MCF 10A (cell line): ENCODE measurements at regions of chr16 and their contacts with region 1.

Region 1: GRCh38 chr16:27154705-27155521 is 48.4 kb upstream of the KDM8 start:
- DNase-seq: peak; percentile 48
- H3K4me3 Mint-ChIP-seq: no peak overlapping the region
- H3K27ac Mint-ChIP-seq: no peak overlapping the region
- H3K4me1 Mint-ChIP-seq: no peaks in the 10 kb centered on the region
- H3K27me3 Mint-ChIP-seq: no peaks in the 10 kb centered on the region
- CTCF ChIP-seq: peak; percentile 85

Region 2: GRCh38 chr16:27109666-27110523 is 45.0 kb before region 1 on chr16:
- CTCF ChIA-PET with region 1: interaction called, 11 read pairs
- POLR2A ChIA-PET with region 1: no interaction called
- intact Hi-C with region 1: no loop called
- DNase-seq: peak; percentile 49
- H3K4me3 Mint-ChIP-seq: no peak overlapping the region
- H3K27ac Mint-ChIP-seq: no peak overlapping the region
- H3K4me1 Mint-ChIP-seq: no peaks in the 10 kb centered on the region
- H3K27me3 Mint-ChIP-seq: peaks cover 28% of the 10 kb centered on the region
- CTCF ChIP-seq: peak; percentile 97

Region 3: GRCh38 chr16:27169511-27170071 is 14.7 kb after region 1 on chr16:
- CTCF ChIA-PET with region 1: interaction called, 132 read pairs
- POLR2A ChIA-PET with region 1: interaction called, 5 read pairs
- intact Hi-C with region 1: no loop called
- DNase-seq: peak; percentile 23
- H3K4me3 Mint-ChIP-seq: no peak overlapping the region
- H3K27ac Mint-ChIP-seq: no peak overlapping the region
- H3K4me1 Mint-ChIP-seq: peaks cover under 1% of the 10 kb centered on the region
- H3K27me3 Mint-ChIP-seq: no peaks in the 10 kb centered on the region
- CTCF ChIP-seq: peak; percentile 12

Region 4: DNA sequence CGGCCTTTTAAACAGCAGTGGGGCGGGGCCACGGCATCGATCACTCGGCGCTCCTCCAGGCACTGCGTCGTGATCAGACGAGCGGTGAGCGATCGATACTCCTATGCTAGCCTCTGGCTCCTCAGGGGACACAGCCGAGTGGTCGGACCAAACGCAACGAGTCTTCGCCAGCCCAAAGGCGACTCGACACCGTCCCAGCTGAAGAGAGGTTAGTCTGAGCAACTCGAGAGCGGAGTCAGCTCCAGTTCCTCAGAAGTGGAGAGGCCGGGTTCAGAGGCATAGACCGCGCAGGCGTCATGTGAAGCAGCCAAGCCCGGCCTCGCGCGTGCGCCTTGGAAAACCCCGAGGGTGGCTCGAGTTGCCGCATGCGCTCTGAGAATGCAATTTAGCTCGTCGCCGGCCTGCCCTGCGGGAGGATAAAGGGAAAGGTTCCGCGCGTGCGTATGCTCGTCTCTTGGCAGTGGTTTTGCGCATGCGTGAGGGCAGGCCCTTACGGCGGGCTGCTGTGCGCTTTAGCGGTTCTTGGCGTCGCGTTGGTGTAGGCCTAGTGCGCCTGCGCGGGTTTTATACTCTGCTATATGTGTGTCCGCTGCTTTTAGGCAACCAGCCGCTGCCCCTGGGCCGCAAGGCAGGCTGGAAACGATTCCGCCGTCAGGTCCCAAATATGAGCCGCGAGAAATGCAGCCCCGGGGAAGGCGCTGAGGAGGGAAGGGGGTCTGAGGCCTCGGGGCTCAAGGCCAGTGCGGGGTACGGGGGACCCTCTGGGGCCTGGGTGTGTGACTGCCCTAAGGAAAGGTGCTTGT is 48.7 kb after region 1 on chr16 and contains the start of gene KDM8:
- CTCF ChIA-PET with region 1: interaction called, 6 read pairs
- POLR2A ChIA-PET with region 1: interaction called, 4 read pairs
- intact Hi-C with region 1: loop called (anchors 1 kb)
- DNase-seq: peak; percentile 99
- H3K4me3 Mint-ChIP-seq: peak within 1 kb of the TSS; percentile 95
- H3K27ac Mint-ChIP-seq: peak within 1 kb of the TSS; percentile 100
- H3K4me1 Mint-ChIP-seq: peaks cover 10% of the 10 kb centered on the region
- H3K27me3 Mint-ChIP-seq: no peaks in the 10 kb centered on the region
- CTCF ChIP-seq: no peak
- total RNA-seq, gene KDM8: 3.7 and 4.1 TPM in 2 replicates

Region 5: DNA sequence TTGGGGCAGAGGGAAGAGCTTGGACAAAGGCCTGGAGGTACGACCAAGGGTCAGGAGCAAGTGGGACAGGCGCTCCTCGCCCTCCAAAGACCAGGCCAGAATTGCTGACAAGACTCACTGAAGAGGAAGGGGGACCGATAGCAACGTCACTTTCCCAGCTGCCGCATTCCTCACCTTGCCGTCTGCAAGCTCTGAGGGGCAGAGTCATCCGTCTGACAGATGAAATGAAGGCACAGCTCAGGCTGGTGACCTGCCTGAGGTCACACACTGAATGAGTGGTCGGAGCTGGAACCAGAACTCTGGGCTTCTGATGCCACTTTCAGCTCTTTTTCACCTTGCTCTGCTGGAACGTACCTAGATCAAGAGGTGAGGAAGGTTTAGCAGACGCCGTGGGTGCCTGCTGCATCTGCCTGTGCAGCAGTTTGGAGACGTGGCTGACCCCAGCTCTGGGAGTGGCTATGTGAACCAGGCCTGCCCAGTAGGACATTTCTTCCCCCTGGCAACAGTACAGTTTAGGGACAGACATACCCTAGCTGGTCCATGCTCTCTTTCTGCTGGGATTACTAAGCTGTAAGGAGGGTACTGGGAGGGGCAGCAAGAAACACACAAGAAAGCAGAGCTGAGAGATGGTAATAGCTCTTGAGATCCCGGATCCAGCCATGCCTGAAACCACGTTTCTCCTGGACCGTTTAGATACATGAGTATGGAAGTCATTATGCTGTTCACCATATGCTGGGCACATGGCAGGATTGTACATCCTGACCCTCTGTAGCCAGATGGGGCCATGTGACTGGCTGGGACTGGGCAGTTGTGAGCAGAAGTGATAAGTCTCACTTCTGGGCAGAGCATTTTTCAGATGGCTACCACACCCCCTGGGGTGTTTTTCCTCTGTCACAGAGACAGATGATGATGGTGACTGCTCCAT is 297.9 kb after region 1 on chr16:
- CTCF ChIA-PET with region 1: interaction called, 15 read pairs
- POLR2A ChIA-PET with region 1: no interaction called
- intact Hi-C with region 1: loop called (anchors 1 kb)
- DNase-seq: no peak
- H3K4me3 Mint-ChIP-seq: no peak overlapping the region
- H3K27ac Mint-ChIP-seq: no peak overlapping the region
- H3K4me1 Mint-ChIP-seq: peaks cover 4% of the 10 kb centered on the region
- H3K27me3 Mint-ChIP-seq: peaks cover 8% of the 10 kb centered on the region
- CTCF ChIP-seq: no peak

Region 6: DNA sequence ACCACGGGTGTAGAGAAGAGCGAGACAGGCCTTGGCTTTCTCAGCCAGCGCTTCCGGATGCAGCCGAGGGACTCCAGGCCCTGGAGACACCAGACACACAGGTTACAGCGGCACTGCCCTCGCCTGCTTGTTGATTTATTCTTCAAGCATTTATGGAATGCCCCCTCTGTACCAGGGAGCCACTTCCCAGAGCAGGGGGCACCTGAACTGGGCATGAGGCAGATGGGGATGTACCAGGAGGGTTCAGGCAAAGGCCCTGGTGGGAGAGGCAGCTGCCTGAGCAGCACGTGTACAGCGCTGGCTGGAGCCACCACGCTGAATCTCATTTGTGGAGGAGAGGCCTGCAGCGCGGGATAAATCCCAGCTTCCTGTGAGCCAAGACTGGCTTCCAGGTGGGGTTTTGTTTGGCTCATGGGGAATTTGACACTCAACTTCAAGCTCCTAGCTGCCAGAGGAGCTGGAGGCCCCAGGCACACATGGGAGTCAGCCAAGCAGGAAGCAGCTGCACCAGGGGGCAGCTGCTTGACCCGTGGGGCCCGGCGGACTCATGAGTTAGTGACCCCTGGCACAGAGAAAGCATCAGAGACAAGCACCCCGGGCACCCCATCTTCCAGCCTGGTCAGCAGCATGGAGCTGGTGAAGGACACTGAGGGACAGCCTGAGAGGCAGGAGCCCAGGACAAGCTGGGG is 306.7 kb after region 1 on chr16:
- CTCF ChIA-PET with region 1: interaction called, 7 read pairs
- POLR2A ChIA-PET with region 1: no interaction called
- intact Hi-C with region 1: loop called (anchors 1 kb)
- DNase-seq: no peak
- H3K4me3 Mint-ChIP-seq: no peak overlapping the region
- H3K27ac Mint-ChIP-seq: peak overlapping the region; percentile 16
- H3K4me1 Mint-ChIP-seq: no peaks in the 10 kb centered on the region
- H3K27me3 Mint-ChIP-seq: no peaks in the 10 kb centered on the region
- CTCF ChIP-seq: no peak